ENCODE measurements at regions of chr12 and their contacts with region 1.

Region 1: DNA sequence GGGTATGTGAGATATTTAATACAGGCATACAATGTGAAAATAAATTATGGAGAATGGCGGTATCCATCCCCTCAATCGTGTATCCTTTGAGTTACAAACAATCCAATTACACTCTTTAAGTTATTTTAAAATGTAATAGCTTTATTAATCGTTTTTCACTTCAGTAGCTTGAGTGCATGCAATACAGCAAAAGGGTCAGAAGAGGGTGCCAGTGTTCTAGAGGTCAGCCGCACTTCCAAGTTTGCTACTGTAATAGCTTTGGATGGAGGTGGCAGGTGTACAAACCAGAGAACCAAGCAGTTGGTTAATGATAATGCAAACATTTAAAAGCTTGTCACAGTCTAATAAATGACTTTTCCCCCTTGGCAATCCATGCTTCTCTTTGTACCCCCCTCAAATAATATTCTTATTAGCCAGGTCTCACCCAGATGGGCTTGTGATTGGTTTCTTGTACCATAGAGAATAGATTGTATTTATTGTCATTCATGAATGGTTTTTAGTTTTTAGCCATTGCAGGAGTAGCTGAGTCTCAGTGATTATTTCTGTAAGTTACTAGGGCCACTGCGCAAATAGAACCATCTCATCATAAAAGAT is 127.0 kb downstream of the ERC1 start:
- DNase-seq: peak; percentile 84

Region 2: DNA sequence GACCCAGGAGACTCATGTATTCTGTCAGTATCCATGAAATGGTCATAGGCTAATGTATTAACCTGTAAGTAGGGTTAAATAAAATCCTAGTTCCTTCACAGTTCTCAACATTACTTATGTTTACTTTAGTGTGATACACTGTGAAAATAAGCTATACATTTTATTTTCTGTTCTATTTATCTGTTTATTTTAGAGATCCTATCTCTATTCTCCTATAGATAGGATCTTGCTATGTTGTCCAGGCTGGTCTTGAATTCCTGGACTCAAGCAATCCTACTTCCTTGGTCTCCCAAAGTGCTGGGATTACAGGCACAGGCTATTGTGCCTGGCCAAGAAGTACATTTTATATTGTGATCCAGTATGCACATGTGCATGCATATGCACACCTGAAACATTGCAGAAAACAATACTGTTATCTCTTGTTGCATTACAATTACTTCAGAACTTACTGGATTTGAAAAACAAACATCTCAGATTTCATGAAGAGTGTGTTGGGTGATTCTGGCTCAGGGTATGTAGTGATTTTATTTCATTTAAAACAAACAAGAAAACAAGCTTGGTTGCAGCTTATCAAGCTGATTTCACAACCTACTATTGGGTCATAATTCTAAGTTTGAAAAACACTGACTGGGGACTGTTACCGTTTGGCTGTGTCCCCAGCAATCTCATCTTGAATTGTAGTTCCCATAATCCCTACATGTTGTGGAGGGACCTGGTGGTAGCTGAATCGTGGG is 96.0 kb before region 1 on chr12:
- in situ Hi-C with region 1: no loop called
- DNase-seq: no peak

Region 3: DNA sequence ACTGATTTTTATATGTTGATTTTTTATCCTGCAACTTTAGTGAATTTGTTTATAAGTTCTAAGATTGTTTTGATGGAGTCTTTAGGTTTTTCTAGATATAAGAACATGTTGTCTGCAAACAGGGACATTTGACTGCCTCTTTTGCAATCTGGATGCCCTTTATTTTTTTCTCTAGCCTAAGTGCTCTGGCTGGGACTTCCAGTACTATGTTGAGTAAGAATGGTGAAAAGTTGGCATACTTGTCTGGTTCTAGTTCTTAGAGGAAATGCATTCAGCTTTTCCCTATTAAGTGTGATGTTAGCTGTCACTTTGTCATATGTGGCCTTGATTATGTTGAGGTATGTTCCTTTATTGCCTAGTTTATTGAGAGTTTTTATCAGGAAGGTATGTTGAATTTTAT is 58.9 kb before region 1 on chr12:
- in situ Hi-C with region 1: no loop called
- DNase-seq: no peak

Region 4: GRCh38 chr12:1373901-1374695 is 256.0 kb after region 1 on chr12:
- in situ Hi-C with region 1: no loop called
- DNase-seq: no peak

Region 5: DNA sequence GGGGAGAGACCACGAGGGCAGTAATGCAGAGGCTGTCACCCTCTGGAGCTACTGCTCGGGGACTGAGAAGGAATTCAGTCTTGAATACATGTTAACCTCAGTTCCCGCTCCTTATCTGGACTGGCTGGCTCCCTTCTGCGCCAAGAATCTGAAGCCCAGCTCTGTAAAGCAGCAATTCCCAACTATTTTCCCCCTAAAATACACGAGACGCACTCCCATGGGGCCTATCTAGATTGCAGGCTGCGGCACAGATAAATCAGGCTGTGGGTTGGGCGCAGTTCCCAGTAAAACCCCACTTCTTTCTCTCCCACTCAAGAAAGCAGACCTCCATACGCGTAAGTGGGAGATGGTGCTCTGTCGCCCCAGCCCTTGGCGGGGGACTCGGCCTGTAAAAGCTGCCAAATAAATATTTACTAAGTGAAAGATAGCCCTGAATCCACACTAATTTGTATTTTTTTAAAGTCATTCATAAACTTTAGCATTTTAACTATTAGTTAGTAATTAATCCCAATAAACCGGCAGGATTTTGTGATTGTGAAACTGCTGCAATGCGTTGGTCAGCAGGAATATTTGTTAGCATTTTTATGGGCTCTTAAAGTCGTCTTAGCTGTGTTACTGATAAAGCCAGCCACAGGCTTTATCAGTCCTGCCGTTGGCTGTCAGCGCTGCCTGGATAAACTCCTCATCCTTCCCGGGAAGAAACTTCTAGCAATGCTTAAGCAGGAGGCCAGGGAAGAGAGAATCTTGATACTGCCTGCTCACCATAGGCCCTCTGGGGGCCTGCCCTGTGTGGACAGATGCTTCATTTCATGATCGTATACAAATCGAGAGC is 458.6 kb after region 1 on chr12:
- in situ Hi-C with region 1: loop called (anchors 10 kb)
- DNase-seq: no peak

Region 6: GRCh38 chr12:1619587-1619986 is 501.5 kb after region 1 on chr12:
- in situ Hi-C with region 1: no loop called
- DNase-seq: no peak